ENCODE measurements at regions of chr1 and their contacts with region 1.

Region 1: GRCh38 chr1:58162952-58163550 is 383.5 kb downstream of the OMA1 start:
- DNase-seq: peak; percentile 69
- H3K4me3 ChIP-seq: no peak overlapping the region
- H3K27ac ChIP-seq: no peak overlapping the region
- H3K4me1 ChIP-seq: no peaks in the 10 kb centered on the region
- H3K27me3 ChIP-seq: no peaks in the 10 kb centered on the region
- CTCF ChIP-seq: peak; percentile 98 to 99

Region 2: GRCh38 chr1:57232500-57232899 is 930.6 kb before region 1 on chr1:
- CTCF ChIA-PET with region 1: no interaction called
- dilution Hi-C with region 1: no loop called
- in situ Hi-C with region 1: no loop called
- intact Hi-C with region 1: loop called (anchors 1 kb)
- DNase-seq: peak; percentile 12
- H3K4me3 ChIP-seq: no peak overlapping the region
- H3K27ac ChIP-seq: no peak overlapping the region
- H3K4me1 ChIP-seq: no peaks in the 10 kb centered on the region
- H3K27me3 ChIP-seq: no peaks in the 10 kb centered on the region
- CTCF ChIP-seq: peak; percentile 7 to 54

Region 3: GRCh38 chr1:57424231-57425027 is 738.6 kb before region 1 on chr1:
- CTCF ChIA-PET with region 1: no interaction called
- dilution Hi-C with region 1: no loop called
- in situ Hi-C with region 1: no loop called
- intact Hi-C with region 1: loop called (anchors 10 kb)
- DNase-seq: no peak
- H3K4me3 ChIP-seq: peak overlapping the region; percentile 36 to 42 (median 38)
- H3K27ac ChIP-seq: no peak overlapping the region
- H3K4me1 ChIP-seq: peaks cover 15% of the 10 kb centered on the region
- H3K27me3 ChIP-seq: peaks cover 50% of the 10 kb centered on the region
- CTCF ChIP-seq: peak; percentile 53 to 76

Region 4: DNA sequence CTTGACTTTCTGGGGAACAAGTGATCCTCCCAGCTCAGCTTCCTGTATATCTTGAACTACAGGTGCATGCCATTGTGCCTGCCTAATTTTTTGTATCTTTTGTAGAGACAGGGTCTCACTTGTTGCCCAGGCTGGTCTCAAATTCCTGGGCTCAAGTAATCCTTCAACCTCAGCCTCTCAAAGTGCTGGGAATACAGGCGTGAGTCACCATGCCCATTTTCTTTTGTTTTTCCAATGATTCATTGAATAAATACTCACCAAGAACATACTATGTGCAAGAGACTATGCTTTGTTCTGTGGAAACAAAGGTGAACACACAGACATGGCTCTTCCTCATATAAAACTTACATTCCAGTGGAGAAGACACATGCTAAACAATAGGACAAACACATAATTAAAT is 331.4 kb before region 1 on chr1:
- CTCF ChIA-PET with region 1: no interaction called
- dilution Hi-C with region 1: no loop called
- in situ Hi-C with region 1: no loop called
- intact Hi-C with region 1: loop called (anchors 1 kb)
- DNase-seq: peak; percentile 89
- H3K4me3 ChIP-seq: no peak overlapping the region
- H3K27ac ChIP-seq: no peak overlapping the region
- H3K4me1 ChIP-seq: peaks cover 40% of the 10 kb centered on the region
- H3K27me3 ChIP-seq: no peaks in the 10 kb centered on the region
- CTCF ChIP-seq: no peak

Region 5: DNA sequence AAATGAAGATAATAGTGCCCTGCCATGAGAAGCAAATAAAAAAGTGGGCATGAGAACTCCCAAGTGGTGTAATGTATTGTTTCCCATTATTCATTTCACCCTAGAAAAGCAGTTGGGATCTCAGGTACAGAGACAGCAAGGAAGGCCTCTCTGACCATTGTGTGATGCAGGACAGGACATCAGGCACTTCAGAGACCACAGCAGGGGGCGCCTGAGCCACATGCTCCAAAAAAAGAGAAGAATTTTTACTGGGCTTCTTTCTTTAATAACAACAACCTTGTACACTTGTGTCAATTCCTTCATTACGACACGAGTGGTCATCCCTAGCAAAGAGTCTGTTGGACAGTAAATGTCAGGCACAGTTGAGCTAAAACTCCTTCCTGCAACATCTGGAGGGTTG is 149.8 kb before region 1 on chr1:
- CTCF ChIA-PET with region 1: no interaction called
- dilution Hi-C with region 1: no loop called
- in situ Hi-C with region 1: no loop called
- intact Hi-C with region 1: loop called (anchors 1 kb)
- DNase-seq: no peak
- H3K4me3 ChIP-seq: no peak overlapping the region
- H3K27ac ChIP-seq: no peak overlapping the region
- H3K4me1 ChIP-seq: no peaks in the 10 kb centered on the region
- H3K27me3 ChIP-seq: no peaks in the 10 kb centered on the region
- CTCF ChIP-seq: peak in 1 of 2 donors; percentile 44

Region 6: DNA sequence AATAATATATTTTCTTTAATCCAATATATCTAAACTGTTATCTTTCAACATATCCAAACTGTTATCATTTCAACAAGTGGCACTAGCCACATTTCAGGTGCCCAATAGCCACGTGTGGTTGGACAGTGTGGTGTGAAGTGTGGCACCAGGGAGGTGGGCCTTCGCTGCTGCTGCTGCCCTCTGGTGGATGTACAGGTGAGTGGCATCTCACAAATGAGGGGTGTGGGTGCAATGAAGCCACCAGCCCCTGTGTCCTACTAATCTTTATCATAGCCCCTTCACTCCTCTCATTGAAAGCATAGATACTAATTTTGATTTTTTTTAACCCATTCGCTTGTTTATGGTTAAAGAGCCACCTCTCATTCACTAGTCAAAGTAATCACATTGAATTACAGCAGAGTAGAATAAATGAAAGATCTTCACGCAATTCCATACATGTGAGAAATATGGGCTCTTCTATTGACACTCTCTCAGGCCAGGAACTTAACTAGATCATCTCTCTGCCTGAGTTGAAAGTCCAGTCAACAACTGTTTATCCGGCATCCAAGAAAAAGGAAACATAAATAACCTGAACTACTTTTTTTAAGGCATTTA is 115.7 kb before region 1 on chr1:
- CTCF ChIA-PET with region 1: no interaction called
- dilution Hi-C with region 1: no loop called
- in situ Hi-C with region 1: no loop called
- intact Hi-C with region 1: no loop called
- DNase-seq: no peak
- H3K4me3 ChIP-seq: no peak overlapping the region
- H3K27ac ChIP-seq: no peak overlapping the region
- H3K4me1 ChIP-seq: peaks cover under 1% of the 10 kb centered on the region
- H3K27me3 ChIP-seq: peaks cover 6% of the 10 kb centered on the region
- CTCF ChIP-seq: peak; percentile 79 to 85

Region 7: GRCh38 chr1:58065520-58065919 is 97.5 kb before region 1 on chr1:
- CTCF ChIA-PET with region 1: no interaction called
- dilution Hi-C with region 1: no loop called
- in situ Hi-C with region 1: no loop called
- intact Hi-C with region 1: loop called (anchors 5 kb)
- DNase-seq: no peak
- H3K4me3 ChIP-seq: no peak overlapping the region
- H3K27ac ChIP-seq: no peak overlapping the region
- H3K4me1 ChIP-seq: peaks cover 15% of the 10 kb centered on the region
- H3K27me3 ChIP-seq: no peaks in the 10 kb centered on the region
- CTCF ChIP-seq: peak in 1 of 2 donors; percentile 19

Region 8: GRCh38 chr1:58238844-58239243 is 75.8 kb after region 1 on chr1:
- CTCF ChIA-PET with region 1: no interaction called
- dilution Hi-C with region 1: no loop called
- in situ Hi-C with region 1: no loop called
- intact Hi-C with region 1: no loop called
- DNase-seq: no peak
- H3K4me3 ChIP-seq: no peak overlapping the region
- H3K27ac ChIP-seq: no peak overlapping the region
- H3K4me1 ChIP-seq: no peaks in the 10 kb centered on the region
- H3K27me3 ChIP-seq: no peaks in the 10 kb centered on the region
- CTCF ChIP-seq: no peak

Measured in mammary epithelial cell (primary cell).